B cell (primary cell): ENCODE measurements at regions of chr1 and their contacts with region 1.

Region 1: DNA sequence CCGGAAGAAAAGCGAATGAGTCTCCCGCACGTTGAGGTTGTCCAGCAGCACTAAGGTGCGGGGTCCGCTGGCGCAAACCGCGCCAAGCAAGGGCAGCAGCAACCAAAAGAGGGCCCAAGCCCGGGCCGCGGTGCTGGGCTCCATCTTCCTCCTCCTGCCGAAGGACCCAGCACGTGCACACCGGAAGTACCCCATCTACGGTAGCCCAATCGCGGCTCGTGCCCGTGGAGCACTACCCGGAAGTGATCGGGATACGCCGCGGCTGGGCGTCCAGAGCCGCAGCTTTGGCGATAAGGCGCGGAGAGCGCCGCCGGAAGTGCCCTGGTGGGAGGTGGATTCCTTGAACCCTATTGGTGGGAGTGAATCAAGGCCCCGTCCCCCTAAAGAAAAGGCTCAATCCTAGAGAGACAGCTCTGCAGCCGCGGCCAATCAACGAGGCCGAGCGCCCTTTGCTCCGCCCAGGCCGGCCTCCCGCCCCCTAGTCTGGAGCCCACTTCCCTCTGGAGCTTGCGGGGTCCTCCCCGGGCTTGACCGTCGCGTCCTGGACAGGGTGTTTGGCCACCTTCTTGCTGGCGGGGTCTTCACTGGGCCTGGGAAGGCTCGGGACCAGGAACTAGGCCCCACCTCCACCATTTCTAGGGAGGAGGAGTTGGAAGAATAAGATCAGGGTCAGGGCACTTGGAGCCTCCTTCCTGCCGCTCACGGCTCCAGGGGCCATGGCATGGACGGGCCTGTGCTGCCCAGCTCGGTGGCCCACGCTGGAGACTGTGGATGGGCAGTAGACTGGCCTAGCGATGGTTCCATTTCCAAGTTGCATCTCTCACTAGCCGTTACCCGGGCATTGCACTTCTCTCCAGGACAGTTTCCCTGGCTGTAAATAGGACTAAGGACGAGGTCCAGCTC is at the start of gene DDOST:
- DNase-seq: peak; percentile 96
- ATAC-seq: peak; percentile 96
- H3K4me3 ChIP-seq: peak within 1 kb of the TSS; percentile 50 to 97 (median 85)
- H3K4me3 Mint-ChIP-seq: peak within 1 kb of the TSS; percentile 95
- H3K27ac ChIP-seq: peak within 1 kb of the TSS; percentile 56 to 76
- H3K27ac Mint-ChIP-seq: peak within 1 kb of the TSS; percentile 98
- H3K4me1 ChIP-seq: peaks cover 19 to 23% of the 10 kb centered on the region in 2 donors
- H3K4me1 Mint-ChIP-seq: peaks cover 39% of the 10 kb centered on the region
- H3K27me3 ChIP-seq: no peaks in the 10 kb centered on the region
- H3K27me3 Mint-ChIP-seq: no peaks in the 10 kb centered on the region
- CTCF ChIP-seq: peak; percentile 46
- total RNA-seq, gene DDOST: 99.2 and 108 TPM in 2 replicates

Region 2: DNA sequence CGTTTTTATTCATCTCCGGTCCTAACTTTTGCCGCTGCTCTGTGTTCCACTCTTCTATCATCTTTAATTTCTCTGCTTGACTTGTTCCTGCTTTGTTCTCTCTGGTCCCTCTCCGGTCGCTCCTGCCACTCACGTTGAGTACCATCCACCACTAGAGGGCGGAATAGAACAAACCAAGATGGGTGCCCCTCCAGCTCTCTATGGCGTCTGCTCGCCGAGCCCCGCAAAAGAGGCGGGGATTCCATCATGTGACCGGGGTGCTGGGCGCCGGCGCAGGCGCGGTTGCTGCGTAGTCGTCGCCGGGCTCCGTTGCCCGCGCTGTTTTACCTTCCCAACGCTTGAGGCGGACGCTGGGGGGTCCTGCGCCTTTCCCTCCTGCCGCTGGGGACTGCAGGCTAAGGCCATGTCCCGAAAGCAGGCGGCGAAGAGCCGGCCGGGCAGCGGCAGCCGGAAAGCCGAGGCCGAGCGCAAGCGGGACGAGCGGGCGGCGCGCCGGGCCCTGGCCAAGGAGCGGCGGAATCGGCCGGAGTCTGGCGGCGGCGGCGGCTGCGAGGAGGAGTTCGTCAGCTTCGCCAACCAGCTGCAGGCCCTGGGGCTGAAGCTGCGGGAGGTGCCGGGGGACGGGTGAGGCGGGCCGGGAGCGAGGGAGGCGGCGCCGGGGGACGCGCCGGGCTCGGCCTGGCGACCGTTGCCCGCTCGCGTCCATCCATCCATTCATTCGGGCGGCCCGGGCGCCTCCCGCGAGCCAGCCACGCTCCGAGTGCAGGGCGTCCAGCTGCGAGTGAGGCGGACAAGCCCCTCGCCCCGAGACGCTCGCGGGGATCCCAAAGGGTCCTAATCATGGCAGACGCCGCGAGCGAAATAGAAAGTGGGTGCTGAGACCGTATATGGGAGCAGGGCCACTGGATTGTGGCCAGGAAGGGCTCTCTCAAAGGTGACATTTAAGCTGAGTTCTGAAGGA is 779.1 kb before region 1 on chr1 and contains the start of gene OTUD3:
- CTCF ChIA-PET with region 1: no interaction called
- POLR2A ChIA-PET with region 1: no interaction called
- intact Hi-C with region 1: loop called (anchors 1 kb)
- DNase-seq: peak; percentile 98
- ATAC-seq: peak; percentile 96
- H3K4me3 ChIP-seq: peak within 1 kb of the TSS; percentile 68 to 84 (median 81)
- H3K4me3 Mint-ChIP-seq: peak within 1 kb of the TSS; percentile 83
- H3K27ac ChIP-seq: peak within 1 kb of the TSS; percentile 62 to 80
- H3K27ac Mint-ChIP-seq: peak within 1 kb of the TSS; percentile 68
- H3K4me1 ChIP-seq: peaks cover 12 to 14% of the 10 kb centered on the region in 2 donors
- H3K4me1 Mint-ChIP-seq: peaks cover 27% of the 10 kb centered on the region
- H3K27me3 ChIP-seq: peaks cover 0 to 10% (median 4%) of the 10 kb centered on the region in 4 experiments
- H3K27me3 Mint-ChIP-seq: peaks cover 3% of the 10 kb centered on the region
- CTCF ChIP-seq: peak; percentile 81
- total RNA-seq, gene OTUD3: 19.0 and 19.6 TPM in 2 replicates

Region 3: DNA sequence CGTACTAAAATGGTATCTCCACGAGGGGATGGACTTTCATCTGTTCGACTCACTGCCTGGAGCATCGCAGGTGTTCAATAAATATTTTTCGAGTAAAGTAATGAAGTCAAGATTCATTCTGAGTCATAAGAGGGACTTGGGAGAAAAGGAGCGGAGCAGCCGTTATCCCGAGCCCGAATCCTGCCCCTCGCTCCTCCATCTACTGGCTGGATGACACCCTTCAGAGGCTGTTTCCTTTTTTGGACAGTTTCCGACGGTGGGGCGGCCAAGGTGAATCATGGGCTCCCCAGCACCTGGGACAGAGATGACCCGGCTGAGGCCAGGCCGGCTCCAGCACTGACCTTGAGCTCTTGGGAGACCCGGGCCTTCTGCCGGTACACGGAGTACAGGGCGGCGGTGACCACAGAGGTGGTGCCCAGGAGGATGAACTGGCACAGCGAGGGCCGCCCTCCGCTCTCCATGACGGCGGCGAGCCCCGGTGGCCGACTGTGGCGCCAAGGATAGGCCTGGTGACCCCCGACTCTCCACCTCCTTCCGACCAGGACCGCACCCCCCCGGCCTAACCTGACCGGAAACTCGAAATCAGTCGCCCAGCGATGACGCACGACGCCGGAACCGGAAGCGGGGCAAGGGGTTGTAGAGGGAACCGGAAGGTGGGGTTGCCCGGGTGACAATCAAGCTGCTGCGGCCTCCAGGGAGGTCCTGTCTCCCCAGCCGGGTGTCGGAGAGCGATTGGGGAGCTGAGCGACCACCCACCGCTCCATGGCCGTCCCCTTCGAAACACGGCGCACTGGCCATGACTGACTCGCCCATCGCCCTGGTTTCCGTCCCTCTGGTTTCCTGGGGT is 153.7 kb before region 1 on chr1 and contains the start of gene MUL1:
- CTCF ChIA-PET with region 1: no interaction called
- POLR2A ChIA-PET with region 1: no interaction called
- intact Hi-C with region 1: loop called (anchors 1 kb)
- DNase-seq: peak; percentile 93
- ATAC-seq: peak; percentile 87
- H3K4me3 ChIP-seq: peak within 1 kb of the TSS; percentile 76 to 100 (median 86)
- H3K4me3 Mint-ChIP-seq: peak within 1 kb of the TSS; percentile 91
- H3K27ac ChIP-seq: peak within 1 kb of the TSS; percentile 93 to 96
- H3K27ac Mint-ChIP-seq: peak within 1 kb of the TSS; percentile 93
- H3K4me1 ChIP-seq: peaks cover 14 to 22% of the 10 kb centered on the region in 2 donors
- H3K4me1 Mint-ChIP-seq: peaks cover 22% of the 10 kb centered on the region
- H3K27me3 ChIP-seq: peaks cover 0 to 13% (median 1%) of the 10 kb centered on the region in 4 experiments
- H3K27me3 Mint-ChIP-seq: peaks cover 4% of the 10 kb centered on the region
- CTCF ChIP-seq: no peak
- total RNA-seq, gene MUL1: 23.9 and 24.6 TPM in 2 replicates

Region 4: DNA sequence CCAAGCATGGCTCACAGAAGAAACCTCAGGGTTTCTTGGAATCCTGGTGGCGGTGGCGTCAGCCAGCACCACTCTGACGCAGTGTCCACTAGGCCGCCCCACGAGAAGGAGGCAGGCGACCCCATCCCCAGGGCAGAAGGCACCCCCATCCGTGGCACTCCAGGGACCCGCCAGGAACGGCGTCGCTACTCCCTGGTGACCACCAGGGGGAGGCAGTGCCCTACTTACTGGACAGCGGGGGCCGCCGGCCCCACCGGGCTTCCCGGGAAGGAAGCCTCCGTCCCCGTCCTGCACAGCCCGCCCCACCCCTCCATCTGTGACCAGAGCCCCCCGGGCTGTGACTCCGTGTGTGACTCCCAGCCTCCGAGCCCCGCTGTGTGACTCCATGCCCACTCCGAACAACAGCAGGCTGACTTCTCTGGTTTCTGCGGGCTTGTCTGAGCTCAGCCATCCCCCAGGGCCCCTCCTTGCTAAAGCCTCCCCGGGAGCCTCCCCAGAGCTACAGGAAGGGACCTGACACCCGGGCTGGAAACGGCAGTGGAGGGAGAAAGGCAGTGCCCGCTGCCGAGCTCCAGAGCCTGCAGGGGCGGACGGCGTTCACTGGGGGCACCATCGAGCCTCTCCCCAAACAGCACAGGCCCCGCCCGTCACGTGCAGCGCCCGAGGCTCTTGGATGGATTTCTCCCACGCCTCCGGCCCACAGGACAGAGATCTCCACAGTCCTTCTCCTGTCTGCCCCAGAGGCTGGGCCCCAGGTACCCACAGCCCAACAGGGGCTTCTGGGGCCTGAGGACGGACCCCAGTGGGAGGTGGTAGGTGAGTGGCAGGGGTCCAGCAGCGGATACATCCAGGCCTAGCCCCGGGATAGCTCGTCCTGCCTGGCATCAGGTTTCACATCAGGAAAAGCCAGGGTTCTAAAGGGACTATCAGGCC is 35.2 kb after region 1 on chr1:
- CTCF ChIA-PET with region 1: no interaction called
- POLR2A ChIA-PET with region 1: no interaction called
- intact Hi-C with region 1: loop called (anchors 2 kb)
- DNase-seq: peak; percentile 83
- ATAC-seq: peak; percentile 94
- H3K4me3 ChIP-seq: peak overlapping the region; percentile 42 to 82 (median 79)
- H3K4me3 Mint-ChIP-seq: peak overlapping the region; percentile 91
- H3K27ac ChIP-seq: no peak overlapping the region
- H3K27ac Mint-ChIP-seq: no peak overlapping the region
- H3K4me1 ChIP-seq: peaks cover 0 to 8% of the 10 kb centered on the region in 2 donors
- H3K4me1 Mint-ChIP-seq: peaks cover 4% of the 10 kb centered on the region
- H3K27me3 ChIP-seq: no peaks in the 10 kb centered on the region
- H3K27me3 Mint-ChIP-seq: no peaks in the 10 kb centered on the region
- CTCF ChIP-seq: peak; percentile 98

Region 5: DNA sequence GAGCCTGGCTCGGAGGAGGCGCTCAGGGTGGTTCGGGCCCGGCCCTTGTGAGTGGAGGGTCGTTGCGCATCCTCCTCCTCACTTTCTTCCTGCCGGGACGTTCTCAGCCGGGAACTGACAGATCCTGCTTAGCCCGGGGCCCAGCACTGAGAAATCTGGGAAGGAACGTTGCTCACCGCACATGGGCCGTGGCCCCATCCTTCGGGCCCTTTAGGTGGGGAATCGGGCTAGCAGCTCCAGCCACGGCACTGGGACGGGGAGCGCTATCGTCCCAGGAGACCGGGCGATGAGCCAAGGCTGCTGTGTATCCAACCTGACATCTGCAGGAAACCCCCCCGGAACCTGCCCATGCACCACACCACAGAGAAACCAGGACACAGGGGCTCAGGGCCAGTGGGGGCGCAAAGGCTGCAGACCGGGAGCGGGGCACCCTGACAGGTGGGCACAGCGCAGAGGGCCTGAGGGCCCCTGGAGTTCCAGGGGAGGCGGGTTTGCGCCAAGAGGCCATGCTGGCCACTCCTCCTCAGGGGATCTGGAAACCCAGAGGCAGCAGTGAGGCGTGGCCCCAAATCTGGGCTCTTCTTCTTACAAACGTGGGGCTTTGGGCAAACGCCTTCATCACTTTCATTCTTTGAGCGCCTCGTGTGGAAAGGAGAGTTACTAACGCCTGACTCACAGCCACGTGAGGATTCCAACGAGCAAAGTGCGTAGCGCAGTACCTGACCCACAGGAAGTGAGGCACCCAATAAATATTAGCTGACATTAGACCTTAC is 71.3 kb after region 1 on chr1 and contains the start of gene SH2D5:
- CTCF ChIA-PET with region 1: no interaction called
- POLR2A ChIA-PET with region 1: no interaction called
- intact Hi-C with region 1: loop called (anchors 1 kb)
- DNase-seq: peak; percentile 84
- ATAC-seq: peak; percentile 70
- H3K4me3 ChIP-seq: peak within 1 kb of the TSS; percentile 22 to 70 (median 60)
- H3K4me3 Mint-ChIP-seq: peak within 1 kb of the TSS; percentile 94
- H3K27ac ChIP-seq: no peak within 1 kb of the TSS
- H3K27ac Mint-ChIP-seq: peak within 1 kb of the TSS; percentile 86
- H3K4me1 ChIP-seq: peaks cover 27 to 30% of the 10 kb centered on the region in 2 donors
- H3K4me1 Mint-ChIP-seq: peaks cover 19% of the 10 kb centered on the region
- H3K27me3 ChIP-seq: peaks cover 0 to 35% (median 13%) of the 10 kb centered on the region in 4 experiments
- H3K27me3 Mint-ChIP-seq: peaks cover 13% of the 10 kb centered on the region
- CTCF ChIP-seq: peak; percentile 62
- total RNA-seq, gene SH2D5: 0.29 and 0.30 TPM in 2 replicates

Region 6: DNA sequence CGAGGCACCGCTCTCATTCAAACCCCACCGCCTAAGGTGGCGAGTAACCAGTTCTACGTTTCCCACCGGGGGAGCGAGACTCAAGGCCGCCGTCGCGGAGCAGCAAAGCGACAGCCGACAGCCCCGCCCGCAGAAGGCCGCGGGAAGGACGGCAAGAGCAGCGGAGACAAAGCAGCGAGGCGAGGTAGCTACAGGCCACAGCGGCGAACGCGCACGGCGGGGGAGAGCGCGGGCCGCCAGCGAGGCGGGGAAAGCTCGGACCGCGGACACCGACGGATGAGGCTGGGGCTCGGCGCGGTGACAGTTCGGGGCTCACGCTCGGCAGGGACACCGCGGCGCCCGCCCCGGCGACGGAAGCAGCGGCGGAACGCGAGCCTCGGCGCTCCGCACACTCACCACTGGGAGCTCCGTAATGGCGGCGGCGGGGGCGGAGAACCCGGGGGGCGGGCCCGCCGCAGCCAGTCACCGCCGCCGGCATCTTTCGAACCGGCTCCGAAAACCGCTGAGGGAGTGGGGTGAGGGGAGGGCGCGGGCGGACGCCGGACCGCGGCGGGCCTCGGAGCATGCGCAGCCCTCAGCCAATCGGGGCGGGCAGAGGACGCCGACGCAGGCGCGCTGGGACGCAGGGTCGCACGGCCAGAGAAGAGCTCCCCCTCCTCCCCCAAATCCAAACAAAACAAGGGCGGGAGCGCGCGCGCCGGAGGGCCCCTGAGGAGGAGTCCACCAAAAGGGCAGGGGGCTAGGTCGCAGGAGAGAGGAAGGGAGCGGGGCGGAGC is 125.0 kb after region 1 on chr1:
- CTCF ChIA-PET with region 1: no interaction called
- POLR2A ChIA-PET with region 1: no interaction called
- intact Hi-C with region 1: loop called (anchors 1 kb)
- DNase-seq: peak; percentile 98
- ATAC-seq: peak; percentile 72
- H3K4me3 ChIP-seq: peak overlapping the region; percentile 78 to 92 (median 82)
- H3K4me3 Mint-ChIP-seq: peak overlapping the region; percentile 99
- H3K27ac ChIP-seq: peak overlapping the region; percentile 81 to 91
- H3K27ac Mint-ChIP-seq: peak overlapping the region; percentile 98
- H3K4me1 ChIP-seq: peaks cover 19 to 33% of the 10 kb centered on the region in 2 donors
- H3K4me1 Mint-ChIP-seq: peaks cover 39% of the 10 kb centered on the region
- H3K27me3 ChIP-seq: no peaks in the 10 kb centered on the region
- H3K27me3 Mint-ChIP-seq: no peaks in the 10 kb centered on the region
- CTCF ChIP-seq: no peak

Region 7: GRCh38 chr1:20921285-20921684 is 259.8 kb after region 1 on chr1:
- CTCF ChIA-PET with region 1: no interaction called
- POLR2A ChIA-PET with region 1: no interaction called
- intact Hi-C with region 1: no loop called
- DNase-seq: no peak
- ATAC-seq: no peak
- H3K4me3 ChIP-seq: no peak overlapping the region
- H3K4me3 Mint-ChIP-seq: no peak overlapping the region
- H3K27ac ChIP-seq: no peak overlapping the region
- H3K27ac Mint-ChIP-seq: no peak overlapping the region
- H3K4me1 ChIP-seq: no peaks in the 10 kb centered on the region
- H3K4me1 Mint-ChIP-seq: peaks cover 9% of the 10 kb centered on the region
- H3K27me3 ChIP-seq: no peaks in the 10 kb centered on the region
- H3K27me3 Mint-ChIP-seq: no peaks in the 10 kb centered on the region
- CTCF ChIP-seq: no peak